MCF 10A (cell line): ENCODE measurements at regions of chr7 and their contacts with region 1.

Region 1: DNA sequence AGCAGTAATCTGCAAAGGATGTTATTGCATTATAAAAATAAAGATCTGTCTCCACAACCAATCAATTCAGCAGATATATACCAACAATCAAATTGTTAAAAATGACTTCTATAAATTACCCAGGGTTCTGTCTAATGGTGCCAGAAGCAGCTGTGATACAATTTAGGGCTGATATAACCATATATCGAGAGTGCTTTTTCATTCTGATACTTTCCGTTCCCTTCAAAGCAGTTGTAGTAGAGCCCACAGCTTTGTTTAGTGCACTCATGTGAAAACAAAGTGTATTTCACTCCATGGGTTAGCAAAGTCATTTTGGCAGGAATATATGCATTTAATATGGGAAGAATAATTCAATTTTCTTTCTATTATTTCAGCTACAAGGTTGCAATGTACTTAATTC is 83.1 kb upstream of the CHCHD3 start:
- DNase-seq: no peak
- H3K4me3 Mint-ChIP-seq: no peak overlapping the region
- H3K27ac Mint-ChIP-seq: no peak overlapping the region
- H3K4me1 Mint-ChIP-seq: no peaks in the 10 kb centered on the region
- H3K27me3 Mint-ChIP-seq: peaks cover 86% of the 10 kb centered on the region
- CTCF ChIP-seq: no peak

Region 2: DNA sequence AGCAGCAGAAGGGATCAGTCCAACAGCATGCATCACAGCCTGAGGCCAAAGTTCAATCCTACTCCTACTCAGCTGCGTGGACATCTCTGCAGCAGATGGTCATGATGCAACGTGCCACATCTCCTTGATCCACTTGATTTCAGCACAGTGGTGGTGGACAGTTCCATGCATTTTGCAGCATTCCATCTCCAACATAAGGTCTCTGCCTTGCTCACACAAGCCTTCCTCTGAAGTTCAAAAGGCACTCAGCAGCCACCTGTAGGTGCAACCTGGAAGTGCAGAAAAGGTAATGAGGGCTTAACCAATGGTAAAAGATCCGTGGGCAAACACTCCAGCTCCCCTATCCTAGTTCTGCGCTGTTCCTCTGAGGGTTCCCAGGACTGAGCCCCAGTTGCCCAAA is 25.7 kb before region 1 on chr7:
- CTCF ChIA-PET with region 1: no interaction called
- POLR2A ChIA-PET with region 1: no interaction called
- intact Hi-C with region 1: loop called (anchors 1 kb)
- DNase-seq: peak; percentile 60
- H3K4me3 Mint-ChIP-seq: no peak overlapping the region
- H3K27ac Mint-ChIP-seq: no peak overlapping the region
- H3K4me1 Mint-ChIP-seq: no peaks in the 10 kb centered on the region
- H3K27me3 Mint-ChIP-seq: peaks cover 80% of the 10 kb centered on the region
- CTCF ChIP-seq: no peak

Region 3: DNA sequence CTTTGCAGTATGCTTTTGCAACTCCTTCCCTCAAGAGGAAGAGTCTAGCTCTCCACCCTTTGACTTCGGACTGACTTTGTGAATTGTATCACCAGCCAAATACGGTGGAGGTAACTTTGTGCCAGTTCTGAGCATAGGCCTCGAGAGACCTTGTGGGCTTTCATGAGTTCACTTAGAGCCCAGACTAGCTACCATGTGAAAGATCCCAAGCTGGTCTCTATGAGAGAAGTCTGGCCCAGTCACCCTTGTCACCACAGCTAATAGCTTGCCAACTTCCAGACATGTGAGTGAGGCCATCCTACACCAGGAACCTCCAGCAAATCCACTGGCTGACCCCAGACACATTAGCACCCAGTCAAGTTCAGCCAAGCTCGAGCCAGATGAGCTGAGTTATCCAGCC is 15.7 kb after region 1 on chr7:
- CTCF ChIA-PET with region 1: no interaction called
- POLR2A ChIA-PET with region 1: no interaction called
- intact Hi-C with region 1: no loop called
- DNase-seq: no peak
- H3K4me3 Mint-ChIP-seq: no peak overlapping the region
- H3K27ac Mint-ChIP-seq: no peak overlapping the region
- H3K4me1 Mint-ChIP-seq: no peaks in the 10 kb centered on the region
- H3K27me3 Mint-ChIP-seq: peaks cover 23% of the 10 kb centered on the region
- CTCF ChIP-seq: no peak

Region 4: DNA sequence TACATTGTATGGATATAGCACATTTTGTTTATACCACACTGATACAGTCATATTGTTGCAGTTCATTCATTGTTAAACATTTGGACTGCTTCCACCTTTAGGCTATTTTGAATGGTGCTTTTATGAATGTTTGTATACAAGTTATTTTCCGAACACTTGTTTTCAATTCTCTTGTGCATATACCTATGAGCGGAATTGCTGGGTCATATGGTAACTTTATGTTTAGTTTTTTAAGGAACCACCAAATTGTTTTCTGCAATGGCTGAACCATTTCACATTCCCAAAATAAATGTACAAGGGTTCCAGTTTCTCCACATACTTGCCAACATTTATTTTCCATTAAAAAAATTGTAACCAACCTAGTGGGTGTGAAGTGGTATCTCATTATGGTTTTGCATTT is 83.9 kb after region 1 on chr7:
- CTCF ChIA-PET with region 1: no interaction called
- POLR2A ChIA-PET with region 1: no interaction called
- intact Hi-C with region 1: no loop called
- DNase-seq: no peak
- H3K4me3 Mint-ChIP-seq: no peak overlapping the region
- H3K27ac Mint-ChIP-seq: no peak overlapping the region
- H3K4me1 Mint-ChIP-seq: peaks cover under 1% of the 10 kb centered on the region
- H3K27me3 Mint-ChIP-seq: no peaks in the 10 kb centered on the region
- CTCF ChIP-seq: no peak

Region 5: GRCh38 chr7:133331861-133332260 is 166.9 kb after region 1 on chr7:
- CTCF ChIA-PET with region 1: no interaction called
- POLR2A ChIA-PET with region 1: no interaction called
- intact Hi-C with region 1: no loop called
- DNase-seq: no peak
- H3K4me3 Mint-ChIP-seq: no peak overlapping the region
- H3K27ac Mint-ChIP-seq: no peak overlapping the region
- H3K4me1 Mint-ChIP-seq: no peaks in the 10 kb centered on the region
- H3K27me3 Mint-ChIP-seq: no peaks in the 10 kb centered on the region
- CTCF ChIP-seq: no peak